ENCODE measurements at regions of chr7 and their contacts with region 1.

Region 1: DNA sequence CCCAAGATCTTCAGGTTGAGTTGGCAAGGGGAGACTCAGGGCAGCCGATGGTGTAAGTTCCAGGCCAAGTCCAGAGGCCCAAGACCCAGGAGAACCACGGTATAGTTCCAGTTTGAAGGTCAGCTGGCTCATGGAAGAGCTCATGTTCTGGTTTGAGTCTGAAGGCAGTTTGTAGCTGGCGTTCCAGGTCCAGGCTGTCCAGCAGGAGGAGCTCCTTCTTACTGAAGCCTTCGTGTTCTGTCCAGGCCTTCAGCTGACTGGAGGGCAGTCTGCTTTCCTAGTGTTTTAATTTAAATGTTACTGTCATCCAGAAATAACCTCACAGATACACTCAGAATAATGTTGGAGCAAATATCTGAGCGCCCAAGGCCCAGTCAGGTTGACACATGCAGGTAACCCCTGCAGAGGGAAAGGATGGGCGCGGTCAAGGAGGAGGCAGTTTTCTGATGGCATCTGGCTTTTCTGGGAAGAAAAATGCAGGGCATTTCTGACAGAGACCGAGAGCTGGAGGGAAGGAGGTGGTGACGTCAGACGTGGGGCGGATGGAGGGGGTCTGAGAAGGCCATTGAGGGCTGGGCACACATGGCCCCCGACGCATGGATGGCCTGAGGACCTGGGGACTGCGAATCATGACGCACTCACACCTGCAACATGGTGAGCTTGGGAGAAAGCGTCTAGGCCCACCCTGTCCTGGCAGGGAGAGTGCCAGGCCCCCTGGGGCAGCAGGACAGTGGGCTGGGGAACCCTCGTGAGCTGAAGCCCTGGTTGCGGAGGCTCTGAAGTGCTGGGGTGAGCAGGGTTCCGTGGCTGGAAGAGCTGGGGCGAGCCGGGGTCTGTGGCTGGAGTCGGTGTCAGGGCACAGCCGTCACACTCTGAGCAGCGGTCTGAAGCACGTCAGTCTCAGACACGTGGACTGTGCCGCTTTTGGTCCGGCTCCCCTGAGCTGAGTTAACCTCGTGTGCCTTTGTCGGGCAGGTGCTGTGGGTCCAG is 4.4 kb downstream of the SUN1 start:
- DNase-seq: no peak
- ATAC-seq: peak; percentile 37 to 63 (median 53)
- H3K4me3 ChIP-seq: peak overlapping the region; percentile 11
- H3K27ac ChIP-seq: peak overlapping the region; percentile 96
- H3K4me1 ChIP-seq: peaks cover 67% of the 10 kb centered on the region
- H3K27me3 ChIP-seq: no peaks in the 10 kb centered on the region
- CTCF ChIP-seq: peak; percentile 52

Region 2: DNA sequence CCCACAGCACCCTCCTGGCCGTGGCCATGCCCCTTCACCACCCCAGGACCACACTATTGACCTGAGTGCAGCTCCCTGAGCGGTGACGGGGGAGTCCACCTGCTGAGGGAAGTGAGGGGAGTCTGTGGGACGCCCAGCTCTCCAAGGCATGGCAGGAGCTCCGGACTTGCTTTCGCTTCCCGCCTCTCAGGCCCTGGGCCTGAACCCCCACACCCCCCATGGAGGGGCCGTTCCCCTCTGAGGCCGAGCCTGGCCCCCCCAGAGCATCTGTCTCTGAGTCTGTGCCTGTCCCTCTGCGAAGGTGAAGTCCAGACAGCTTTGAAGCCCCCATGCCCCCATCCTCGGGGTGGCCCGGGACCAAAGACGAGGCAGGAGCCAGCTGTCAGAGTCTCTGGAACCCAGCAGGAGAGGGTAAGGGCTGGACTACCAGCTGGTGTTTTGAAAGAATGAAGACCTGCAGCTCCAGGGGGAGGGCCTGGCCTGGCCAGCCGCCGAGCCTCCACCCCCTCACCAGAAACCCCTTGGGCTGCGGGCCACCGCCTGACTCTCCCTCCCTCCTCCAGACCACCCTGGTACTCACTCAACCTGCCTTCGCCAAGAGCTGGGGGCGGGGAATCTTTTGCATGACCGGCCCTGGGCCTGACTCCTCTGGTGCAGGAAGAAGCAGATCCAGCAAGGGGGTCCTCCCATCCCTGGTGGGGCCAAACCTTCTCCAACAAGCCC is 431.1 kb before region 1 on chr7:
- intact Hi-C with region 1: no loop called
- DNase-seq: peak in 1 of 2 donors; percentile 33
- ATAC-seq: no peak
- H3K4me3 ChIP-seq: no peak overlapping the region
- H3K27ac ChIP-seq: no peak overlapping the region
- H3K4me1 ChIP-seq: no peaks in the 10 kb centered on the region
- H3K27me3 ChIP-seq: peaks cover 3 to 47% (median 4%) of the 10 kb centered on the region in 3 donors
- CTCF ChIP-seq: no peak

Region 3: GRCh38 chr7:786472-787255 is 50.0 kb before region 1 on chr7:
- intact Hi-C with region 1: loop called in 1 of 2 experiments (anchors 5 kb)
- DNase-seq: peak; percentile 78 to 87
- ATAC-seq: peak; percentile 89 to 94 (median 92)
- H3K4me3 ChIP-seq: no peak overlapping the region
- H3K27ac ChIP-seq: no peak overlapping the region
- H3K4me1 ChIP-seq: peaks cover 5% of the 10 kb centered on the region
- H3K27me3 ChIP-seq: no peaks in the 10 kb centered on the region
- CTCF ChIP-seq: peak; percentile 74